Testis (tissue), 5 donors: ENCODE measurements at regions of chr12 and their contacts with region 1.

Region 1: GRCh38 chr12:124379938-124380754 is 85.3 kb downstream of the RFLNA start:
- DNase-seq: peak; percentile 76
- H3K4me3 ChIP-seq: no peak overlapping the region
- H3K27ac ChIP-seq: peak overlapping the region; percentile 82 to 83
- H3K4me1 ChIP-seq: peaks cover 35% of the 10 kb centered on the region
- H3K27me3 ChIP-seq: no peaks in the 10 kb centered on the region
- CTCF ChIP-seq: peak; percentile 51 to 71 (median 66)
- POLR2A ChIP-seq: no peak

Region 2: GRCh38 chr12:124422570-124423523 is 42.7 kb after region 1 on chr12:
- intact Hi-C with region 1: loop called (anchors 10 kb)
- DNase-seq: peak; percentile 94
- H3K4me3 ChIP-seq: no peak overlapping the region
- H3K27ac ChIP-seq: peak overlapping the region; percentile 52 to 78
- H3K4me1 ChIP-seq: peaks cover 47% of the 10 kb centered on the region
- H3K27me3 ChIP-seq: no peaks in the 10 kb centered on the region
- CTCF ChIP-seq: no peak
- POLR2A ChIP-seq: no peak